GM10248 (cell line): ENCODE measurements at regions of chr13 and their contacts with region 1.

Region 1: DNA sequence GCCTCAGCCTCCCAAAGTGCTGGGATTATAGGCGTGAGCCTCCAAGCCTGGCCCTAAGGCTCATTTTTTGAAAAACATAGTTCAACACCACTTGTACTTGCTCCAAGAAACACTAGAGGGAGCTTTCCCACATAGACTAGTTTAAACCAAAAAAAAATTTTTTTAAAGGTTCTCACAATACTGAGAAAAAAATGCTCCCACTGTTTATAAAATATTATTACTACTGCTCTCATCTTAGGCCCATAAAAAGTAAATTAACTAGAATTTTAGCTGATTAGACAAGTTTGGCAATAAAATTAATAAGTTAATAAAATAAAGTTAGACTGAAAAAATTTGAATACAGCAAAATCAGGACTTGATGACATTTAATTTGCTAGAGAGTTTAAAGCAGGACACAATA is 109.5 kb downstream of the TBC1D4 start:
- DNase-seq: peak; percentile 40
- CTCF ChIP-seq: peak; percentile 73

Region 2: GRCh38 chr13:75312884-75313520 is 59.5 kb before region 1 on chr13:
- CTCF ChIA-PET with region 1: interaction called, 13 read pairs
- POLR2A ChIA-PET with region 1: no interaction called
- DNase-seq: no peak
- CTCF ChIP-seq: no peak

Region 3: GRCh38 chr13:75357576-75358289 is 14.8 kb before region 1 on chr13:
- CTCF ChIA-PET with region 1: interaction called, 75 read pairs
- POLR2A ChIA-PET with region 1: interaction called, 3 read pairs
- DNase-seq: peak; percentile 67
- CTCF ChIP-seq: peak; percentile 45

Region 4: GRCh38 chr13:75384879-75385707 is 12.6 kb after region 1 on chr13:
- CTCF ChIA-PET with region 1: interaction called, 75 read pairs
- POLR2A ChIA-PET with region 1: interaction called, 3 read pairs
- DNase-seq: no peak
- CTCF ChIP-seq: no peak

Region 5: DNA sequence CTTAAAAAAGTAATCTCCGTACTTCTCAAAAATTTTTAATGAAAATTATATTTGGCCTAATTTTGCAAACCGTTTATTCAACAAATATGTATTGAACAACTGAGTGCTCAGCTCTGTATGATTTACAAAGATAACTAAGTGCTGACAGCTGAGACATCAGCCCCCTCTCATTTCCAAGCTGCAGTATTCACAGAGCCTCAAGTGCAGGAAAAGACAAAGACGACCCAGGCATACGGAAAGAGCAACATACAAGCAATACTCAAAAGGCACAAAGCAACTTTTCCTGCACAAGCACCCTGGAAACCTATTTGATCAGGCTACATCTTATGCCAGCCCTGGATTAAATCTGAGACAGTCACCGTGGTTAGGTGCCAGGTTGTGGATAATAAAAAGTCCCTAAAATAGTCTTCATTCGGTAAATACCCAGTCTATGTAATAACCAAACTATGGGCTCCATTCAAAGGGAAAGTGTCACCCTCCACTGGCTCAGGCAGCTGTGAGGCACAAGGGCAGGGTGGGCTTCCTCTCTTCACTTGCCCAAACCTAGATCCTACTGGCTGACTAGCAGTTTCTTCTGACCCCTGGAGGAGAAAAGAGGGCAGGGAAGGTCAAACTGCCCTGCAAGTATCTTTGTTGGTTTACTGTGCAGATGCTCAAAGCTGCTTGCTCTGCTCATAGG is 43.9 kb after region 1 on chr13:
- CTCF ChIA-PET with region 1: interaction called, 13 read pairs
- POLR2A ChIA-PET with region 1: no interaction called
- DNase-seq: no peak
- CTCF ChIP-seq: peak; percentile 16